ENCODE measurements at regions of chr3 and their contacts with region 1.

Region 1: DNA sequence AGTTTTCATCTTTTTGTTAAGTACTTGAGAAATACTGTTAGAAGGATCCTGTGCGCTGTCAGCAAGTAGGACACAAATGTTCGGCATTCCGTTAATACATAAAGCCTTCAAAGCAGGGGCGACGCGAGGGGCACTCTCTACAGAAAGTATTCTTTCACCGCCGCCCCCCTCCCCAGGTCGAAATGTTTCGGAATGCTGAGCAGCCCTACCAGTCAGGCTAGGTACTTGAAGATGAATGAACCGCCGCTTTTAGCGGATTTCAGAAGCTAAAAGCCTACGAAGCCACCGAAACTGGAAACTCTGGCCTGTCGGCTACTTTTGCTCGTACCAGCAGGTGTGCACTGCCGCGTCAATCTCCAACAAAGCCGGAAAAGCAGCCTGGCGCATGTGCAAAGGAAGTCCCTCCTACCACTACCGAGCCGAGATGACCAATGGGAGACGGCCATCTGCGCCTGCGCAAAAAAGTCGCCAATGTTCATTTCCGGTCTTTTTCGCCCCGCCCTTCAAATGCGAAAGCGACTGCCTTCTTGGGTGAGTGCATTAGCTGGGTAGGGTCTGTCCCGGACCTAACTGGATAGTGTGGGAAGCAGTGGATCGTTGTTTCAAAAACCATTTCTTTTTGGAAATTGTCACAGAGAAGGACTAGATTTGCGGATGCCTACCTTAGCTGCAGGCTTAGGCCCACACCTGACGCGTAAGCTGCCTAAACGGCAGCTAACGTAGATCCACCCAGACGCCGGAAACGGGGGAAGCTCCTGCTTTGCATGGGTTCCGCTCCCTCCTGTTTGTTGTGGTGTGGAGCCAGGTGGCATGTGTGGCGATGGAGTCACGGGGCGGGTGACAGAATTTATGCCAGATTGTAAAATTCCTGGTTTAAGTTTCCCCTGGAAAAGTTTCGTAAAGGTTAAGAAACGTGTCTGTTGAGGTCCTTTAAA is at the start of gene WDR5B:
- DNase-seq: peak; percentile 95 to 98 (median 98)
- H3K4me3 ChIP-seq: peak within 1 kb of the TSS; percentile 48 to 98 (median 86)
- H3K27ac ChIP-seq: peak within 1 kb of the TSS; percentile 47 to 98 (median 91)
- H3K27me3 ChIP-seq: no peaks in the 10 kb centered on the region
- CTCF ChIP-seq: peak in 35 of 56 donors; percentile 9 to 58 (median 29)
- total RNA-seq, gene WDR5B: 1.2 to 7.1 (median 3.7) TPM

Region 2: DNA sequence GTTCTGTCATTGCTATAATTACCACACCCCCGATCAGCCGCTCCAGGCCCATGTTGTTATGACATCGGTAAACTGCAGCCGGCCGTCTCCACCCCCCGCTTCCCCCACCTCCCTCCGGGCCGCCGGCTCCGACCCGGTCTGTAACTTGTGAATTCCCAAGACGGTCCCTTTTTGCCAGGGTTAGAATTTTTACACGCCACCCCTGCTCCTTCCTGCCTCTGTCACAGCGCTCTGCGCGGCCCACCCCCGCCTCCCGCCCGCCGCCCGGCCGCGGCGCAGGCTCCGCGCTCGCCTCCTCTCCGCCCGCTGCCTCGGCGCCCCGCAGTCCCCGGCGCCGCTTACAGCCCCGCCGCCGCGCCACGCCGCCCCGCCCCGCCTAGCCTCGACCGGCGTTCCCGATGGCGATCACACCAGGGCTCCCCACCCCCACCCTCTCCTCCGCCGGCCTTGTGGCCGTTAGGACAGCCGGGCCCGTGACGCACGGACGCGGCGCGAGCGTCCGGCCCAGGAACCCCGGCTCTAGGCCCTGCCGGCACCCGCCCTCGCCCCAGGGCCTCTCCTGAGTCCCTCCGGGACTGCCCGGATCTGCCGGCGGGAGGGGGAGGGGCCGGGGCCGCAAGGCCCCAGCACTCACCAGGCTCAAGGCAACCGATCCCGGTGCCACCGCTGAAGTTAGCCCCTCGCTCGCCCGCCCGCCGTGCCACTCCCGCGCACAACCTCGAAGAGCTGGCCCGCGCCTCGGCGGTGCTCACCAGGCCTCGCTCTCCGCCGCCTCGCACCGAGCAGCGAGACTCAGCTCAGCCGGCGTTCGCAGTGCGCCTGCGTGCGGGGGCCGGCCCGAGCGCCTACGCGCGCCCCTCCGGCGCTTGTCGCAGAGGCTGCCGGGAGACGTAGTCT is 98.4 kb after region 1 on chr3 and contains the start of gene KPNA1:
- intact Hi-C with region 1: loop called (anchors 5 to 10 kb)
- DNase-seq: peak; percentile 72 to 95 (median 84)
- H3K4me3 ChIP-seq: peak within 1 kb of the TSS; percentile 62 to 92 (median 83)
- H3K27ac ChIP-seq: peak within 1 kb of the TSS; percentile 51 to 99 (median 93)
- H3K27me3 ChIP-seq: no peaks in the 10 kb centered on the region
- CTCF ChIP-seq: peak in 27 of 56 donors; percentile 4 to 53 (median 25)
- total RNA-seq, gene KPNA1: 54.6 to 126 (median 91.1) TPM

Region 3: DNA sequence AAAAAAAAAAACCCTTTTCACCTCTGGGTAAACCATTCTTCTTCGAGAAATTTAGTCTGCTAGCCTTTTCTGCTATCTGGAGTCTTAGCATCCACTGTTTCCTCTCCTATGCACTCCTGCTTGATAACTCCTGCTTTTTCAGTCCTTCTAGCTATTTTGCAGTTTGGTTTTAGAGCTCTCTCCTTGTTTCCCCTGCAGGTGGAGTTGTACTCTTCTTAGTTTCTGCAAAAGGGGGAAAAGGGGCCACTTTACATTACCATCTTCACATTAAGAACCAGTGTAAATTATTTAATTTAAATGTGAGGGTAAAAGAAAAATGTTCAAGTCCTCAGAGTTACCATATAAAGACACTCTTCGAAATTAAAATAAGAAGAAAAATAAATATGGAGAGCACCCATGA is 1491.7 kb after region 1 on chr3:
- intact Hi-C with region 1: no loop called
- DNase-seq: no peak
- H3K4me3 ChIP-seq: no peak overlapping the region
- H3K27ac ChIP-seq: no peak overlapping the region
- H3K27me3 ChIP-seq: no peaks in the 10 kb centered on the region
- CTCF ChIP-seq: no peak

Measured in dorsolateral prefrontal cortex (tissue), 120 donors.